ENCODE measurements at regions of chr7 and their contacts with region 1.

Region 1: DNA sequence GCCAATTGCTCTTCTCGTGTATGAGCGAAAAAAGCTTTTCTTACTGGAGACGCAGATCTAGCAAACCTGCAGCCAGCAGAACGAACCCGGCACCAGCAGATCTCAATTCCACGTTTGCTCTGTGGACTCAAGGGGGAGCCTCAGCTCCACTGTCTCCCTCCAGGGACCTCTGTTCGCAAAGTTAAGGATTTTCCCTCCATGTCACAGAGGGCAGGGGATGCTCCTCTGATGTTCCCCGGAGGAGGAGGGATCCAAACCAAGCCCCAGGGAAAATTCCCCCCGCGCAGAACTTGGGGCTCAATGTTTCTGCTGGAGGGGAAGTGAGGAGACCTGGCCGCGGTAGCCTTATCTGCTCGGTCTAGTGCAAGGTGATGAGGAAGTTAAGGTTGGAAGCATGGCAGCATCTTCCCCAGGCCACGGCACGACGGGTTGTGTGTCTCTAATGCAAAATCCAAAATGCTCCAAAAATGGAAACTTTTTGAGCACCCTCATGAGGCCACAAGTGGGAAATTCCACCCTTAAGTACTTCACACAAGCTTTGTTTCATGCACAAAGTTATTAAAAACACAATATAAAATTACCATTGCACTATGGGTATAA is 9.0 kb downstream of the IQCE start:
- DNase-seq: peak in 8 of 10 donors; percentile 58 to 72 (median 66)
- H3K4me3 ChIP-seq: peak overlapping the region in 35 of 59 donors; percentile 0 to 54 (median 22)
- H3K27ac ChIP-seq: peak overlapping the region in 15 of 59 donors; percentile 3 to 64 (median 20)
- H3K27me3 ChIP-seq: no peaks in the 10 kb centered on the region
- CTCF ChIP-seq: peak in 55 of 56 donors; percentile 27 to 76 (median 63)

Region 2: GRCh38 chr7:2417981-2418481 is 149.7 kb before region 1 on chr7:
- intact Hi-C with region 1: no loop called
- DNase-seq: peak in 1 of 10 donors; percentile 61
- H3K4me3 ChIP-seq: no peak overlapping the region
- H3K27ac ChIP-seq: peak overlapping the region in 1 of 59 donors; percentile 57
- H3K27me3 ChIP-seq: no peaks in the 10 kb centered on the region
- CTCF ChIP-seq: no peak

Region 3: GRCh38 chr7:2477447-2478398 is 90.1 kb before region 1 on chr7:
- intact Hi-C with region 1: loop called (anchors 5 to 10 kb)
- DNase-seq: peak in 5 of 10 donors; percentile 20 to 70 (median 26)
- H3K4me3 ChIP-seq: peak overlapping the region in 17 of 59 donors; percentile 0 to 51 (median 21)
- H3K27ac ChIP-seq: no peak overlapping the region
- H3K27me3 ChIP-seq: peaks cover 0 to 15% (median 0%) of the 10 kb centered on the region in 45 donors
- CTCF ChIP-seq: peak; percentile 25 to 76 (median 64)

Region 4: DNA sequence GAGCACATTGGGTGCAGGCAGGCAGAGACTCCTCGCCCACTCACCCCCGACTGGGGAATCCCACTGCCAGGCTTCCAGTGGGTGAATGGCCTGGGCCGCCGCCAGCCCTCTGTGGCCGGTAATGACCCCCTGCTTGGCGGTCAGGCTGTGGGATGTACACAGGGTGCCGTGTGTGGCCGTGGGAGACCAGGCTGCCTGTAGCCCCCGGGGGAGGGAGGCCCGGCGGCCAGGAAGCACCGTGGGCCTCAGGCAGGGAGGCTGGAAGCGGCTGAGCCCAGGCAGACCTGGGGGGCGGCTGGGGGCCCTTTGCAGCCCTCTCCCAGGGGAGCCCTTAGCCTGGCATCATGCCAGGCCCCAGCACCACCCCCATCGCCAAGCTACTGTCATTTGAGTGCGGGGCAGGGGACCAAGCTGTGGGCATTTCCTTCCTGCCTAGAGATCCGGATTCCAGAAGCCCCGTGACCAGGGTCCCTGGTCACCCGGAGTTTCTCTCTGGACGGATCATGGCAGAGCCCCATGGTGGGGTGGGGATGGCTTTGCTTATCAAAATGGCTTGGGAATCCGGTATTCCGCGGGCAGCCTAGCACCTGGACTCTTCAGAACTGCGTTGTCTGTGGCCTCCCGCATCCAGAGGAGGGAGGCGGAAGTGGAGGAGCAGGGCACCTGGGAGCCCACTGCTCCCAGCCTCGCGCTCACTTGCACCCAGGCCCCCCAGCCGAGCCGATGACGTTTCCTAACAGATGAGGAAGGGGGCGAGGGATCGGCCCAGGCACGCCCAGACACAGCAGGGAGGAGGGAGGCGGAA is 65.2 kb after region 1 on chr7:
- intact Hi-C with region 1: loop called in 1 of 2 experiments (anchors 5 kb)
- DNase-seq: peak in 3 of 10 donors; percentile 64 to 76 (median 72)
- H3K4me3 ChIP-seq: peak overlapping the region; percentile 62 to 92 (median 83)
- H3K27ac ChIP-seq: peak overlapping the region in 58 of 59 donors; percentile 19 to 95 (median 84)
- H3K27me3 ChIP-seq: no peaks in the 10 kb centered on the region
- CTCF ChIP-seq: no peak

Region 5: GRCh38 chr7:2660585-2661408 is 93.0 kb after region 1 on chr7:
- intact Hi-C with region 1: loop called in 1 of 2 experiments (anchors 5 kb)
- DNase-seq: no peak
- H3K4me3 ChIP-seq: no peak overlapping the region
- H3K27ac ChIP-seq: peak overlapping the region in 4 of 59 donors; percentile 28 to 71 (median 38)
- H3K27me3 ChIP-seq: no peaks in the 10 kb centered on the region
- CTCF ChIP-seq: peak in 8 of 56 donors; percentile 11 to 35 (median 16)

Region 6: GRCh38 chr7:2680792-2681490 is 113.2 kb after region 1 on chr7:
- intact Hi-C with region 1: loop called (anchors 2 to 10 kb)
- DNase-seq: peak; percentile 80 to 90 (median 88)
- H3K4me3 ChIP-seq: peak overlapping the region in 13 of 59 donors; percentile 3 to 57 (median 42)
- H3K27ac ChIP-seq: peak overlapping the region in 55 of 59 donors; percentile 44 to 95 (median 90)
- H3K27me3 ChIP-seq: peaks cover 0 to 2% (median 0%) of the 10 kb centered on the region in 45 donors
- CTCF ChIP-seq: peak; percentile 56 to 92 (median 82)

Region 7: DNA sequence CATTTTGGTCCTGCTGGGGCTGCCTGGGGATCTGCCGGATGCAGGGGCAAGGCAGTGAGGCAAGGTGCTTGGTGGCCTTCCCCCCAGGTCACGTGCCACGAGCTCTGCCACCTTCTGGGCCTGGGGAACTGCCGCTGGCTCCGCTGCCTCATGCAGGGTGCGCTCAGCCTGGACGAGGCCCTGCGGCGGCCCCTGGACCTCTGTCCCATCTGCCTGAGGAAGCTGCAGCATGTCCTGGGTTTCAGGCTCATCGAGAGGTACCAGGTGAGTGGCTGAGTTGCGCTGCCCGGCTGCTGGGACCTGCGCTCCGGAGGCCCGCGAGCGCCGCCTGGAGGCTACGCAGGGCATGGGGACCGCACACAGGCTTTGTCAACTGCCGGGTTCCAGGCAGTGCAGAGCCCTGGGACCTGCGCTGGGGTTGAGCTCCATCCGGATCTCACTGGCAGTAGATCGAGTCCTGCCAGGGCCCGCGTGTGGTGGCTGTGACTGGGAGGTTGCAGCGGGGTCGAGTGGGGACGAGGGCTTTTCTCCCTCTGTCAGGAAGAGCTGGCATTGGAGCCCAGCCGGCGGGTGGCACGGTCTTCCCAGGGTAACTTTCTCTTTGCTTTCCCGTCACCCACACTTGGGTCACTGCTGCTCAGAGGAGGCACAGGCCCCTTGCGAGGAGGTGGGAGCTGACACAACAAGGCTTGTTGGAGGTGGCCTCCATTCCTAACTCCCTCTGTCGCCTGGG is 141.9 kb after region 1 on chr7:
- intact Hi-C with region 1: loop called in 1 of 2 experiments (anchors 5 kb)
- DNase-seq: peak in 9 of 10 donors; percentile 59 to 83 (median 66)
- H3K4me3 ChIP-seq: peak overlapping the region in 11 of 59 donors; percentile 6 to 43 (median 22)
- H3K27ac ChIP-seq: peak overlapping the region in 2 of 59 donors; percentile 57 to 70
- H3K27me3 ChIP-seq: no peaks in the 10 kb centered on the region
- CTCF ChIP-seq: peak; percentile 34 to 97 (median 86)

Region 8: GRCh38 chr7:2844165-2844898 is 276.6 kb after region 1 on chr7 and contains the start of gene GNA12:
- intact Hi-C with region 1: loop called in 1 of 2 experiments (anchors 10 kb)
- DNase-seq: peak; percentile 97 to 100 (median 99)
- H3K4me3 ChIP-seq: peak within 1 kb of the TSS; percentile 35 to 90 (median 76)
- H3K27ac ChIP-seq: peak within 1 kb of the TSS in 38 of 59 donors; percentile 5 to 85 (median 65)
- H3K27me3 ChIP-seq: no peaks in the 10 kb centered on the region
- CTCF ChIP-seq: peak in 15 of 56 donors; percentile 4 to 32 (median 18)
- total RNA-seq, gene GNA12: 45.2 to 162 (median 67.4) TPM